Right lobe of liver (tissue), 6 donors: ENCODE measurements at regions of chr5 and their contacts with region 1.

Region 1: DNA sequence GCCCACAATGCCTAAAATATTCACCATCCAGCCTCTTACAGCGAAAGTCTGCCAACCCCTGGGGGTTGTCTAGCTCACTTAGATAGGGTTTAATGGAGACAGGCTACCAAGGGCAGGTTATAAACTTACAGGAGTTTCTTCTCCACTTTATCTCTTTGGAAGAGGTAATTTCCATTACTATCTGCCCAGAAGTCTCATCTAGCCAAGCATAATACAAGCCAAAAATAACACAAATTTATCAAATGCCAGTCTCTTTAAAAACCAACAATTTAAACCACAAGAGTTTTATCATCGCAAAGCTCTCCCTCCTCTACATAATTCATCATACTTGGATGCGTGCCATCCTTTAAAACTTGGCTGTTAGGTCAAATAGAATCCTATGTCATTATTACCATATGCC is 6.2 kb downstream of the RBM22 start:
- DNase-seq: no peak
- ATAC-seq: no peak
- H3K4me3 ChIP-seq: no peak overlapping the region
- H3K27ac ChIP-seq: no peak overlapping the region
- H3K4me1 ChIP-seq: peaks cover 0 to 5% (median 2%) of the 10 kb centered on the region in 4 donors
- H3K27me3 ChIP-seq: no peaks in the 10 kb centered on the region
- CTCF ChIP-seq: no peak
- POLR2A ChIP-seq: no peak

Region 2: DNA sequence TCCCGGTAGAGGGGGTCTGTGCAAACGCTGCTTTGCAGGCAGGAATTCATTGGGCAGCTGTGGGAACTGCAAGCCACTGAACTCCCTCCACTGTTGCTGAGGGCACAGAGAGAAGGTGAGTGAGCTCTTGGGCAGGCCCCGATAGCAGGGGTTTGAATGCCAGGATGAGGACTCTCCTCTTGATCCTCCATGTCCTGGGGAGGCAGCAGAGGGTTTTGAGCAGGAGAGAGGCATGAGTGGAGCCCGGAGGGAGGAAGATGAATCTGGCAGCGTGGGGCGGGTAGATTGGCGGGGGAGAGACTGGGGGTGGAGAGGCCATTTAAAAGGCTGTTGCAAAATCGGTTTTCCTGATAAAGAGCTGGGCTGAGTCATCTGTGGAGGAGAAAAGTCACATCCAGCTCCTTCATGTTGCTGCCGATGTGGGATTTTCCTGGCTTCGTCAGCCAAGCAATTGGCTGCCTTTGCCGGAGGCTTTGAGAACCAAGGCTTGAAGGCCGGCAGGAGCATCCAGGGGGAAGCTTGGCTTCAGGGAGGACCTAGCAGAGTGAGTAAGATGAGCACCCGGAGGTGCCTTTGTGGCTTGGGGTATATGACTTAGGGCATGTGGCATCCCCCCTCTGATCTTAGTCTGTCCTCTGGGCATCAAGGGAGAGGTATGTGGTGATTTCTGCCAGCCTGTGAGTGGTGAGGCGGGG is 54.2 kb before region 1 on chr5 and contains the start of gene SYNPO:
- intact Hi-C with region 1: loop called in 1 of 2 experiments (anchors 10 kb)
- DNase-seq: peak; percentile 75 to 83 (median 80)
- ATAC-seq: peak; percentile 50 to 64 (median 56)
- H3K4me3 ChIP-seq: peak within 1 kb of the TSS; percentile 51 to 83 (median 63)
- H3K27ac ChIP-seq: peak within 1 kb of the TSS; percentile 68 to 91 (median 91)
- H3K4me1 ChIP-seq: peaks cover 0 to 83% (median 42%) of the 10 kb centered on the region in 4 donors
- H3K27me3 ChIP-seq: no peaks in the 10 kb centered on the region
- CTCF ChIP-seq: no peak
- POLR2A ChIP-seq: peak; percentile 60
- total RNA-seq, gene SYNPO: 23.4 to 51.8 (median 35.6) TPM